Caco-2 (cell line): ENCODE measurements at regions of chr17 and their contacts with region 1.

Region 1: DNA sequence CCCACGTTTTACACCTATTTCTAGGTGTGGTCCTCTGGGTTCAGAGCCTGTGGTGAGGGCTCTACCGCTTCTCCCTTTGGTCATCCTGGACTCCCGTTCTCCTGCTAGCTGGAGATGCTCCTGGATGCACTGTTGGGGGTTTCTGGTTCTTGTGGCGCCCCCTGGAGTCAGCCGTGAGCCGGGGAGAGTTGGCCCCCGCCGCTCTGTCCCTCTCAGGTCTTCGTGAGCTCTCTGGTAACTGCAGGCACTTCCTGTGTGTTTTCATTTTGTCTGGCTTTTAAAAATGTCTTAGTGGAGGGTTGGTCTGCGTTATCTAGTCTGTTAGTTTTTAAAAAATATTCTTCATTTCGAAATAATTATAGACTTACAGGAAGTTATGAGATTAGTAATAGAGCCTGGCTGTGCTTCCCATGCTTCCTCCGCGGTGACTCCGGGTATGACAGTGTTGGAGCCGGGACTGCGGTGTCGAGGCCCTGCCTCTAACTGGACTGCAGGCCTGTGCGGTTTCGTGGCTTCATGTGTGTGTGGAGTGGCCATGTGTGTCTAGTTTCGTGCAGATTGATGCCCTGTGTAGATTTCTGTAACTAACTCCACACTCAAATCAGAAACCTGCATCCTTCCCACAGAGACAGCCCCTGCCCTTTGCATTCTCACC is 78.0 kb upstream of the ZNF750 start:
- DNase-seq: peak in 1 of 2 experiments; percentile 55
- H3K4me3 ChIP-seq: no peak overlapping the region
- H3K4me3 Mint-ChIP-seq: no peak overlapping the region
- H3K27ac Mint-ChIP-seq: no peak overlapping the region
- H3K4me1 ChIP-seq: peaks cover 6% of the 10 kb centered on the region
- H3K4me1 Mint-ChIP-seq: no peaks in the 10 kb centered on the region
- H3K27me3 ChIP-seq: no peaks in the 10 kb centered on the region
- H3K27me3 Mint-ChIP-seq: no peaks in the 10 kb centered on the region
- CTCF ChIP-seq: peak; percentile 35 to 53

Region 2: GRCh38 chr17:82781894-82782274 is 135.9 kb before region 1 on chr17:
- CTCF ChIA-PET with region 1: interaction called, 30 read pairs
- POLR2A ChIA-PET with region 1: no interaction called
- intact Hi-C with region 1: loop called (anchors 1 kb)
- DNase-seq: peak; percentile 66 to 88
- H3K4me3 ChIP-seq: no peak overlapping the region
- H3K4me3 Mint-ChIP-seq: no peak overlapping the region
- H3K27ac Mint-ChIP-seq: no peak overlapping the region
- H3K4me1 ChIP-seq: no peaks in the 10 kb centered on the region
- H3K4me1 Mint-ChIP-seq: no peaks in the 10 kb centered on the region
- H3K27me3 ChIP-seq: no peaks in the 10 kb centered on the region
- H3K27me3 Mint-ChIP-seq: no peaks in the 10 kb centered on the region
- CTCF ChIP-seq: peak; percentile 93 to 98

Region 3: DNA sequence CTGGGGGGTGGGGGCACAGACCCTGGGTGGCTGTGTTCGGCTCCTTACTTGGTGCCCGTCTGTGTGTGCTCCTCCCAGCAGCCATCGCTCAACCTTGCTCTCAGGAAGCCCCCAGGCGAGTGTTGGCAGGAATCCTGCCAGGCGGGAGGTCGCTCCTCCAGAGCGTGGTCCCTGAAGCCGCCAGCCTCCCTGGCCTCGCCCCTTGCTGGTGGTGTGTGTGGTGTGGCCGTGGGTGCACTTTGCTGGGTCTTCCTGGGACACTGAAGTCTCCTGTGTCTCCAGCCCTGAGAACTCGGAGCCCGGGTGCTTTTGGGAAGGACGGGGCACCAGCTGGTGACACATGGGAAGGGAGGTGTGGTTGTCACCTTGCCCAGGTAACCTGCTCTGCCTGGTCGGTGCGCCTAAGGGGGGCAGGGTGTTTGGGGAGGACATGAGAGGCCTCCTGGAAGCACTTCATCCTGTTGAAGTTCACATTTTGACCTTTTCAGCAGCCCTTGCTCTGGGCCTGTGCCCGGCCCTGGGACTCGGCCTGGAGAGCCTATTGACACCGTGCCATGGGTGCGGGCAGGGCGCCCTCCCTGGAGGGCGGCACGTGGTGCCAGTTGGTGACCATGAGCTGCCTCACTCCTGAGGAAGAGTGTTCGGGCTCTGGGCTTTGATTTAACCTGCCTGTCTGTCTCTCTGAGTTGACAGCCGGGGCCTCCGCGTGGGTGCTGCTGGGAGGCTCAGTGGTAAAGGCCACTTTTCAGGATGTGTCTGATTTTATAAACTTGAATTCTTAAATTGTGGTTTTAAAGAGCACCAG is 28.9 kb before region 1 on chr17:
- CTCF ChIA-PET with region 1: interaction called, 11 read pairs
- POLR2A ChIA-PET with region 1: no interaction called
- intact Hi-C with region 1: no loop called
- DNase-seq: peak in 1 of 2 experiments; percentile 43
- H3K4me3 ChIP-seq: no peak overlapping the region
- H3K4me3 Mint-ChIP-seq: peak overlapping the region; percentile 58
- H3K27ac Mint-ChIP-seq: peak overlapping the region; percentile 94
- H3K4me1 ChIP-seq: peaks cover 50% of the 10 kb centered on the region
- H3K4me1 Mint-ChIP-seq: peaks cover 55% of the 10 kb centered on the region
- H3K27me3 ChIP-seq: no peaks in the 10 kb centered on the region
- H3K27me3 Mint-ChIP-seq: no peaks in the 10 kb centered on the region
- CTCF ChIP-seq: no peak

Region 4: GRCh38 chr17:82931699-82932517 is 14.1 kb after region 1 on chr17:
- CTCF ChIA-PET with region 1: no interaction called
- POLR2A ChIA-PET with region 1: no interaction called
- intact Hi-C with region 1: no loop called
- DNase-seq: peak in 1 of 2 experiments; percentile 34
- H3K4me3 ChIP-seq: no peak overlapping the region
- H3K4me3 Mint-ChIP-seq: no peak overlapping the region
- H3K27ac Mint-ChIP-seq: no peak overlapping the region
- H3K4me1 ChIP-seq: no peaks in the 10 kb centered on the region
- H3K4me1 Mint-ChIP-seq: no peaks in the 10 kb centered on the region
- H3K27me3 ChIP-seq: no peaks in the 10 kb centered on the region
- H3K27me3 Mint-ChIP-seq: no peaks in the 10 kb centered on the region
- CTCF ChIP-seq: no peak

Region 5: DNA sequence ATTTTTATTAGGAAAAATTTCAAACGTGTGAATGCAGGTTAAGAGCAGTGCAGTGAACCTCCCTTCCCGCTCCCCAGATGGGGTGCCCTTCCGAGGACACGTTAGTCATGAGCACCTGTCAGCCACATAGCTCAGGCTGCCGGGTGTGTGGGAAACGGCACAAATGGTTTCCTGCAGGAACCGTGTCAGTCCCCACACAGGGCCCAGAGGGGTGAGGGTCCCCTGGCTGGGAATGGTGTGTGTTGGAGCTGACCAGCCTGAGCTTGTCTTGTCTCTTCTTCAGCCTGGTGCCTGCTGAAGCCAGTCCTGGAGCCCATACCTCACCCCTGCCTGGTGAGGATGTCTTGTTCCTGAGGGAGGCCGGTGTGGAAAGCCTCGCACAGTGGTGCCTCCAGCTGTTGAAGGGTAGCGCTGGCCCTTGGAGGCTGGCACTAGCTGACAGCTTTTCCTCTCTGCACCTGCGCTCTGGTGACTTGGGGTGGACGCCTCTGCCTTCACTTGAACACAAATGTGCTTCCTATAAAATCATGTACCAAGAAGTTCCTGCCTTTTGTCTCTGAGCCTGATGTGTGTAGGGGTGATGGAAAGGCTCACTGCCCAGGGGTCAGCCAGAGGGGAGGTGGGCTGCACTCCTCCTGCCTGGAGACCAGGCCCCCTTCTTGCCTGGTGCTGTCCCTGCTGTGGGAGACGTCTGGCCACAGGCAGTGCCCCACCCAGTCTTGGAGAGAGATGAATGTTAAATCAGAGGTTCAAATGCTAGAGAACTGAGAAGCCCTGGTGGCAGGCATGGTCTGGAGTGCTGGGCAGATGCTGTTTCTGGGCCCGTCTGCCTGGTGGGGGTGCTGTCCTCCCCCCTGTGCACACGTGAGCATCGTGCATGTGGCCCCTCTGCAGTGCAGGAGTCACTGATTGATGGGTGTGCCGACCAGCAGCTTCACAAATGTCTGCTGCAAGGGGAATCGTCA is 24.6 kb after region 1 on chr17:
- CTCF ChIA-PET with region 1: no interaction called
- POLR2A ChIA-PET with region 1: no interaction called
- intact Hi-C with region 1: no loop called
- DNase-seq: peak in 1 of 2 experiments; percentile 32
- H3K4me3 ChIP-seq: no peak overlapping the region
- H3K4me3 Mint-ChIP-seq: no peak overlapping the region
- H3K27ac Mint-ChIP-seq: no peak overlapping the region
- H3K4me1 ChIP-seq: no peaks in the 10 kb centered on the region
- H3K4me1 Mint-ChIP-seq: no peaks in the 10 kb centered on the region
- H3K27me3 ChIP-seq: no peaks in the 10 kb centered on the region
- H3K27me3 Mint-ChIP-seq: no peaks in the 10 kb centered on the region
- CTCF ChIP-seq: no peak